Gastrocnemius medialis (tissue), 4 donors: ENCODE measurements at regions of chr7 and their contacts with region 1.

Region 1: GRCh38 chr7:23013715-23014649 is at the start of gene HYCC1:
- DNase-seq: peak; percentile 100
- ATAC-seq: peak; percentile 96
- H3K4me3 ChIP-seq: peak within 1 kb of the TSS; percentile 80 to 94 (median 86)
- H3K27ac ChIP-seq: peak within 1 kb of the TSS; percentile 87 to 92 (median 91)
- H3K4me1 ChIP-seq: peaks cover 37 to 45% of the 10 kb centered on the region in 2 donors
- H3K27me3 ChIP-seq: no peaks in the 10 kb centered on the region
- CTCF ChIP-seq: peak; percentile 72 to 78 (median 76)
- POLR2A ChIP-seq: peak; percentile 96 to 99
- total RNA-seq, gene HYCC1: 26.9 to 147 (median 72.0) TPM

Region 2: DNA sequence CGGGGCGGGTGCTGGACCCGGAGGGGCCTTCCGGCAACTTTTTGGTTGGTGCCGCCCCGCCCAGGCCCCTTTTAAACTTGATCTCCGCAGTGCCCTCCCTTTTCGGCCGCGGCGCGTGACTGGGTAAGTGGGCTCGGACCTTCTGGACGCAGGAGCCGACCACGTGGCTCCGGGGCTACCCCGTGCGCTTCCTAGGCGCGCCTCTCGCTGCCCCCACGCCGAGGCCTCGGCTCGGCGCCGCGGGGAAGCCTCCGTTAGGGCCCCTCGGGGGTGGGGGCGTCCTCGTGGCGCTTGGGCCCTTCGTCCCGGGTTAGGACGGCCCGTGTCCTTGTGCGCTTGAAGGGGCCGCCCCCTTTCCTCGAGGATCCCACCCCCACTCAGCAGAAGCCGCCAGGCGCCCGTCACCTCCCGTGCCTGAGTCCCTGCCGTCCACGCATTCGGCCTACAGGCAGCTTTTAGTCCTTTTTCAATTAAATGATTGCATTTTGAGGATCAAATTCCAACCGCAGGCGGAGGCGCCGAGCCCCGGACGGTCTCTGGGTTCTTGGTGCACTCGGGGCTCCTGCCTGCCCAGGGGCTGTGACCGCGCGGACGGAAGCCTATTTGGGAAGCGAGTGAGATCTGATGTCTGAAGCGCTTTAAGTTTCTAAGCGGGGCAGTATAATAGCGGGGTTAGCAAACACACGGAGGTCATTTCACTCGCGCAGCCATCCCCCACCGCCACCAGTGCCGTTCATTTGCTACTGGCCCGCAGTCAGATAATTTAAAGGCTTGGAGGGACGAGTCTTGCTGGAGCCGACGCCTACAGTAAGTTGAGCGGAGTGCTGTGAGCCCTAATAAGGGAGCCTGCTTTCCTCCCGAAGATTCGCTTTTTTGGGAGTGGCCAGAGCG is 159.6 kb before region 1 on chr7:
- in situ Hi-C with region 1: no loop called
- intact Hi-C with region 1: loop called (anchors 1 kb)
- DNase-seq: peak; percentile 90 to 96
- ATAC-seq: peak; percentile 64 to 68
- H3K4me3 ChIP-seq: peak overlapping the region; percentile 71 to 86 (median 80)
- H3K27ac ChIP-seq: peak overlapping the region; percentile 94 to 99 (median 98)
- H3K4me1 ChIP-seq: peaks cover 36 to 46% of the 10 kb centered on the region in 2 donors
- H3K27me3 ChIP-seq: no peaks in the 10 kb centered on the region
- CTCF ChIP-seq: peak in 3 of 5 experiments; percentile 4 to 79 (median 70)
- POLR2A ChIP-seq: peak; percentile 87 to 90

Region 3: GRCh38 chr7:22969010-22969431 is 45.0 kb before region 1 on chr7:
- in situ Hi-C with region 1: no loop called
- intact Hi-C with region 1: loop called (anchors 1 kb)
- DNase-seq: peak; percentile 83 to 92
- ATAC-seq: peak; percentile 86 to 91
- H3K4me3 ChIP-seq: no peak overlapping the region
- H3K27ac ChIP-seq: peak overlapping the region; percentile 81 to 87 (median 84)
- H3K4me1 ChIP-seq: peaks cover 49% of the 10 kb centered on the region in 2 donors
- H3K27me3 ChIP-seq: no peaks in the 10 kb centered on the region
- CTCF ChIP-seq: no peak
- POLR2A ChIP-seq: peak in 1 of 2 donors; percentile 24

Region 4: DNA sequence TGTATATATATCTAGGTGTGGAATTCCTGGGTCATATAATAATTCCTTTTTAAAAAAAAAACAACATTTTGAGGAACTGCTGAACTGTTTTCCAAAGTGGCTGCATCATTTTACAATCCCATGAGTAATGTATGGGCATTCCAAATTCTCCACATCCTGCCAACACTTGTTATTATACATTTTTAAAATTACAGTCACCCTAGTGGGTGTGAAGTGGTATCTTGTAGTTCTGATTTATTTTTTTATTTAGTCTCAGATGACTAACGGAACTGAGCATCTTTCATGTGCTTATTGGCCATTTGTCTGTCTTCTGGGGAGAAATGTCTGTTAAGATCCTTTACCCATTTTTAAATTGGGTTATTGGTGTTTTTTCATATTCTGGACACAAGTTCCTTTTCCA is 79.6 kb after region 1 on chr7:
- in situ Hi-C with region 1: no loop called
- intact Hi-C with region 1: no loop called
- DNase-seq: no peak
- ATAC-seq: no peak
- H3K4me3 ChIP-seq: no peak overlapping the region
- H3K27ac ChIP-seq: no peak overlapping the region
- H3K4me1 ChIP-seq: no peaks in the 10 kb centered on the region
- H3K27me3 ChIP-seq: no peaks in the 10 kb centered on the region
- CTCF ChIP-seq: no peak
- POLR2A ChIP-seq: no peak

Region 5: GRCh38 chr7:23105644-23106056 is 91.7 kb after region 1 on chr7 and contains the start of gene KLHL7:
- in situ Hi-C with region 1: no loop called
- intact Hi-C with region 1: loop called (anchors 5 kb)
- DNase-seq: peak; percentile 95 to 96
- ATAC-seq: peak; percentile 95 to 97
- H3K4me3 ChIP-seq: peak within 1 kb of the TSS; percentile 84 to 99 (median 88)
- H3K27ac ChIP-seq: peak within 1 kb of the TSS; percentile 87 to 96 (median 92)
- H3K4me1 ChIP-seq: peaks cover 33 to 48% of the 10 kb centered on the region in 2 donors
- H3K27me3 ChIP-seq: no peaks in the 10 kb centered on the region
- CTCF ChIP-seq: peak in 1 of 5 experiments; percentile 16
- POLR2A ChIP-seq: peak; percentile 86 to 90
- total RNA-seq, gene KLHL7: 12.2 to 21.4 (median 14.9) TPM

Region 6: DNA sequence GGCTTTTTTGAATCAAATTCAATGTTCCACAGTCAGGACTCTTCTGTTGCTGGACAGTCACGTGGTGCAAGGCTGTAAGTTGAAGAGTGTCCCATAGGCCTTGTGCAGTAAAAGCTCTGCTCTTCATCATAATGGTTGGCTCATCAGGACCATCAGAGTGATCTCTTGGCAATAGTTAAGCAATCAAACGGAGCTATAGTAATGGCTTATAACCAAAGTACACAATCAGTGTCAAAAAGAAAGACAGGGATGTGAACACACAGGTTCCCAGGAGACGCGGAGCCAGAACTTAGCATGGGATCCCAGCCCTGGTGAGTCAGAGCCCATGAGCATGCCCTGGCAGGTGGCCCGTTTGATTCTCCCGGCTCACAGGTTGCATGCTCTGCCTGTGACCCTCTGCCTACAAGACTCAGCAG is 221.8 kb after region 1 on chr7:
- in situ Hi-C with region 1: no loop called
- intact Hi-C with region 1: no loop called
- DNase-seq: peak; percentile 69 to 76
- ATAC-seq: peak; percentile 86 to 95
- H3K4me3 ChIP-seq: no peak overlapping the region
- H3K27ac ChIP-seq: peak overlapping the region in 2 of 4 donors; percentile 28 to 55
- H3K4me1 ChIP-seq: peaks cover 6 to 10% of the 10 kb centered on the region in 2 donors
- H3K27me3 ChIP-seq: no peaks in the 10 kb centered on the region
- CTCF ChIP-seq: no peak
- POLR2A ChIP-seq: no peak

Region 7: GRCh38 chr7:24138343-24138742 is 1124.4 kb after region 1 on chr7:
- in situ Hi-C with region 1: no loop called
- intact Hi-C with region 1: no loop called
- DNase-seq: no peak
- ATAC-seq: no peak
- H3K4me3 ChIP-seq: no peak overlapping the region
- H3K27ac ChIP-seq: no peak overlapping the region
- H3K4me1 ChIP-seq: no peaks in the 10 kb centered on the region
- H3K27me3 ChIP-seq: no peaks in the 10 kb centered on the region
- CTCF ChIP-seq: no peak
- POLR2A ChIP-seq: no peak